ENCODE measurements at regions of chr3 and their contacts with region 1.

Region 1: GRCh38 chr3:14548321-14548729 is 8.2 kb upstream of the GRIP2 start:
- DNase-seq: peak; percentile 37 to 89
- H3K4me3 ChIP-seq: no peak overlapping the region
- CTCF ChIP-seq: no peak
- POLR2A ChIP-seq: no peak

Region 2: DNA sequence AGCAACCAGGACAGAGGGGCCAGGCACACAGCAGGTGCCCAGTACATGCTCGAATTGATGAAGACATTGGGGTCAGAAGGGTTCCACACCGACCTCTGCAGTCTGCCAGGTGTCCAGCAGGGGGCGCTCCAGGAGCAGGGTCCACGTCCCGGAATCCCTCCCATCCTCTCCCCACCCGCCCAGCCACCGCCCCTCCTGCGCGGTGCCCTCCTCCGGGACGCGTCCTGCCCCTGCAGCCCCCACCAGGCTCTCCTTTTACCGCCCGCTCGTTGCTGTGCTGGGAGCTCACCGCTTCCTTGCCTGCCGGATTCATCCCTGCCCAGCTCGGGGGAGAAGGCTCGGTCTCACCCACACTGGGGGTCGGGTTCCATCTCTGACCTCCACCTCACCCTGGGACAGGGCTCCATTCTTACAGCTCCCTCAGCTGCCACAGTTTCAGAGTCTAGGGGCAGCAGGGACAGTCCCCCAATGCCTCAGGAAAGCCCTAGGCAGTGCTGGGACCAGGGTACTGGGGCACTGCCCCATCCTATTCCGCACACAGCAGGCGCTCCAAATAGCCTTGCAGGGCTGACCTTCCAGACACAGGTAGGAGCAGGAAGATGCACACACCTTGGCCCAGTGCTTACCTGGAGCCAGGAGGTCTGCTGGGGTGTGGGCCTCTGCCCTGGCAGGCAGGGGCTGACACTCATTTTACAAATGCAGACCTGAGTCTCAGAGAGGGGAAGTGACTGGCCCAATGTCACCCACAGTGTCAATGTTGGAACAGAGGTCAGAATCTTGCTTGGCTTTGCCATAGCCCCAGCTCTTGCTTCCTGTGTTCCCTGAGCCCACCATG is 39.1 kb before region 1 on chr3:
- intact Hi-C with region 1: loop called (anchors 2 kb)
- DNase-seq: peak; percentile 43 to 93
- H3K4me3 ChIP-seq: no peak overlapping the region
- CTCF ChIP-seq: no peak
- POLR2A ChIP-seq: no peak

Region 3: GRCh38 chr3:14691239-14691638 is 142.9 kb after region 1 on chr3:
- intact Hi-C with region 1: no loop called
- DNase-seq: no peak
- H3K4me3 ChIP-seq: no peak overlapping the region
- CTCF ChIP-seq: no peak
- POLR2A ChIP-seq: no peak

Region 4: DNA sequence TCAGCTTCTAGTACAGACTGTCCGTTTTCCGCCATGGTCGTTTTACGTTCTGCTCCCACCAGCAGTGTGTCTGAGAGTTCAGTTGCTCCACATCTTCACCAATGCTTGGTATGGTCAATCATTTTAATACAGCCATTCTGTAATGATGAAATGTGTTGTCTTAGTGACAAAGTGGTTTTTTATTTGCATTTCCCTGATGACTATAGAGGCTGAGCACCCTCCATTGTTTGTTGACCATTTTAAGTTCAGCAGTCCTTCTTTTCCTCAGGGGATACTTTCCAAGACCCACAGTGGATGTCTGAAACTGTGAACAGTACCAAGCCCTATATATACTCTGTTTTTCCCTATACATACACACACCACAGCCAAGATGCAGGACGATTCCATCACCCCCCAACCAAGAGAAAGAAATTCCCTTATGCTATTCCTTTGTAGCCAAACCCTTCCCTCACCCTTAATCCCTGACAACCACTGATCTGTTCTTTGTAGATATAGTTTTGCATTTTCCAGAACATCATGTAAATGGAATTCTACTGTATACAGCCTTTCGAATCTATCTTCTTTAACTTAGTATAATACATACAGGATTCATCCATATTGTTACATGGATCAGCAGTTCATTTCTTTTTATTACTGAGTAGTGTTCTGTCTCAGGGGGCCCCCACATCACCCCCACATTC is 182.5 kb after region 1 on chr3:
- intact Hi-C with region 1: no loop called
- DNase-seq: no peak
- H3K4me3 ChIP-seq: no peak overlapping the region
- CTCF ChIP-seq: no peak
- POLR2A ChIP-seq: no peak

Measured in lower leg skin (tissue), 4 donors.